Lower leg skin (tissue), 4 donors: ENCODE measurements at regions of chr1 and their contacts with region 1.

Region 1: GRCh38 chr1:169009666-169010065 is 96.8 kb upstream of the ATP1B1 start:
- DNase-seq: no peak
- H3K4me3 ChIP-seq: no peak overlapping the region
- CTCF ChIP-seq: no peak
- POLR2A ChIP-seq: no peak

Region 2: GRCh38 chr1:168613691-168614231 is 395.9 kb before region 1 on chr1:
- intact Hi-C with region 1: no loop called
- DNase-seq: no peak
- H3K4me3 ChIP-seq: no peak overlapping the region
- CTCF ChIP-seq: no peak
- POLR2A ChIP-seq: no peak

Region 3: GRCh38 chr1:168987332-168987731 is 22.3 kb before region 1 on chr1:
- intact Hi-C with region 1: no loop called
- DNase-seq: no peak
- H3K4me3 ChIP-seq: no peak overlapping the region
- CTCF ChIP-seq: no peak
- POLR2A ChIP-seq: no peak

Region 4: DNA sequence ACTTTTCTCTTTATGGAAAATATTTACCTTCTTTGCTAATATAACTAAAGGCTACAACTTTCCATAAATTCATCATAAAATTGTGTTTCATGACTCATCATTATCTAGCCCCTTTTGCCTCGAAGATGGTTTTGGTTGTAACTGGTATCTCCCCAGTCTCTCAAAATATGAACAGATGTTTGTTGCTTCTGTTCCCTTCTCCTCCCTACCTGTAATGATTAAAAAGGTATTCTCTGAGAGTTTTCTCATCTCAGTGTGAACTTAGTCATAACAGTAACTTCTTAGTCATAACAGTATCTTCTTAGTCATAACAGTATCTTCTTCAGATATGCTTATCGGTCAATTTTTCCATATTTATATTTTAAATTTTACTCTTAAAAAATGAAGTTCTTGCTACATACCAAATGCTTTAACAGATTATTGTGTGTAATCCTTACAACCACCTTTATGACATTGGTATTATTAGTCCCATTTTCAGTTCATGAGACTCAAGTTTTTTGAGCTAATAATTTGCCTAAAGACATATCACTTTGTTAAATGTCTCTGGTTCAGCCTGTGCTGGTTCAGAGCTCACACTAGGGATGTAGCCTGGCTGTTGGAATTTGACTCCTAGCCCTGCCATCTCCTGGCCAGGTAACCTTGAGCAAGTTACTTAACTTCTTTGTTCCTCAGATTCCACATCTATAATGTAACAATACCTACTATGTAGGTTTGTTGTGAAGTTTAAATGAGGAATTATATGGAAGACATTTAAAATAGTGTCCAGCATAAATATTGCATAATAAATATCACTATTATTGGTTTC is 129.4 kb after region 1 on chr1:
- intact Hi-C with region 1: loop called (anchors 2 kb)
- DNase-seq: no peak
- H3K4me3 ChIP-seq: no peak overlapping the region
- CTCF ChIP-seq: no peak
- POLR2A ChIP-seq: no peak